ENCODE measurements at regions of chr10 and their contacts with region 1.

Region 1: GRCh38 chr10:32279795-32280194 is 67.2 kb downstream of the EPC1 start:
- DNase-seq: no peak
- ATAC-seq: no peak

Region 2: GRCh38 chr10:32017021-32017420 is 262.8 kb before region 1 on chr10:
- intact Hi-C with region 1: loop called (anchors 10 kb)
- DNase-seq: no peak
- ATAC-seq: no peak

Region 3: DNA sequence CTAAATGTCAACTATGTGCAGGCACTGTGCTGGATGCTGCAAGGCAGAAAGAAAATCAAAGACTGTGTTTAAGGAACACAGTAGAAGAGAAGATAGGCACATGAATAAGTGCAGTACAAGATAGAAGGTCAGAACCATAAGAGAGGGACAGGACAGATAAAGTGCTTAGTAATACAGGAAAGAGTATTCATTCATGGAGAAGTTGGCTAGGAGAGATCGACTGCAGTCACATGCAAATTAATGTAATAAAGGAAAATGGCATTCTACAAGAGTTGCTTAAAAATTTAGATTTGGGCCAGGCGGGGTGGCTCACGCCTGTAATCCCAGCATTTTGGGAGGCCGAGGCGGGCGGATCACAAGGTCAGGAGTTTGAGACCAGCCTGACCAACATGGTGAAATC is 248.4 kb before region 1 on chr10:
- intact Hi-C with region 1: no loop called
- DNase-seq: no peak
- ATAC-seq: no peak

Measured in Right ventricle myocardium inferior (tissue), 1 donor.